ENCODE measurements at regions of chr14 and their contacts with region 1.

Region 1: GRCh38 chr14:70640938-70641547 is 673 bp upstream of the TTC9 start:
- DNase-seq: peak in 1 of 2 experiments; percentile 66
- H3K4me3 ChIP-seq: peak overlapping the region; percentile 59 to 98 (median 78)
- H3K27ac ChIP-seq: no peak overlapping the region
- H3K4me1 ChIP-seq: peaks cover 11 to 21% (median 14%) of the 10 kb centered on the region in 4 experiments; a peak in 5 of 7 replicates
- H3K27me3 ChIP-seq: no peaks in the 10 kb centered on the region
- CTCF ChIP-seq: no peak
- EP300 ChIP-seq: no peak
- POLR2A ChIP-seq: no peak
- RAD21 ChIP-seq: no peak

Region 2: GRCh38 chr14:70498191-70498590 is 142.9 kb before region 1 on chr14:
- CTCF ChIA-PET with region 1: no interaction called
- POLR2A ChIA-PET with region 1: no interaction called
- DNase-seq: no peak
- H3K4me3 ChIP-seq: no peak overlapping the region
- H3K27ac ChIP-seq: no peak overlapping the region
- H3K4me1 ChIP-seq: no peaks in the 10 kb centered on the region
- H3K27me3 ChIP-seq: no peaks in the 10 kb centered on the region
- CTCF ChIP-seq: no peak
- EP300 ChIP-seq: no peak
- POLR2A ChIP-seq: no peak
- RAD21 ChIP-seq: no peak

Region 3: DNA sequence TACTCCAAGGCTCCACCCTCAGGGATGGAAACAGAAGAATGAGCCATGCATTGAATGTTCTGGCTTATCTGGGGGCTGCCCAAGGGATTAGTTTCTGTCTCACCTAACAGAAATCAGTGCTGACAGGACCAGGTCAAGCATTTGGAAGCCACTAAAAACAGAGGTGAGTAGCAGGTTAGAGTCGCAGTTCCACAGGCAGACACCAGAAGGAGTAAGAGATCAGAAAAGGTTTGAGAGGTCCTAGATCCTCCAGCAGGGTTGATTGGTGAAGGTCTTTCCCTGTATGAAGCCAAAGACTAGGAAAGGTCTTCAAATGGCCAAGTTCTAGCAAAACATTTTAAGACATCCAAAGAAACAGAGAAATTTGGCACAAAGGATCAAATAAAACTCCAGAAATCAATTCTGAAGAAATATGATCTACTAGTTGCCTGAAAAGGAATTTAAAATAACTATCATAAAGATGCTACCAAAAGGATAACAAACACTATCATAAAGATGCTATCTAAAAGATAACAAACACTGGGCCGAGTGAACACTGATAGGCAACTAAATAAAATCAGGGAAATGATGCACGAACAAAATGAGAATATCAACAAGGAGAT is 18.8 kb before region 1 on chr14:
- CTCF ChIA-PET with region 1: interaction called, 43 read pairs
- POLR2A ChIA-PET with region 1: interaction called, 5 read pairs
- DNase-seq: peak in 1 of 2 experiments; percentile 75
- H3K4me3 ChIP-seq: no peak overlapping the region
- H3K27ac ChIP-seq: no peak overlapping the region
- H3K4me1 ChIP-seq: no peaks in the 10 kb centered on the region
- H3K27me3 ChIP-seq: no peaks in the 10 kb centered on the region
- CTCF ChIP-seq: peak; percentile 31 to 95 (median 94)
- EP300 ChIP-seq: no peak
- POLR2A ChIP-seq: no peak
- RAD21 ChIP-seq: peak; percentile 96 to 97

Region 4: DNA sequence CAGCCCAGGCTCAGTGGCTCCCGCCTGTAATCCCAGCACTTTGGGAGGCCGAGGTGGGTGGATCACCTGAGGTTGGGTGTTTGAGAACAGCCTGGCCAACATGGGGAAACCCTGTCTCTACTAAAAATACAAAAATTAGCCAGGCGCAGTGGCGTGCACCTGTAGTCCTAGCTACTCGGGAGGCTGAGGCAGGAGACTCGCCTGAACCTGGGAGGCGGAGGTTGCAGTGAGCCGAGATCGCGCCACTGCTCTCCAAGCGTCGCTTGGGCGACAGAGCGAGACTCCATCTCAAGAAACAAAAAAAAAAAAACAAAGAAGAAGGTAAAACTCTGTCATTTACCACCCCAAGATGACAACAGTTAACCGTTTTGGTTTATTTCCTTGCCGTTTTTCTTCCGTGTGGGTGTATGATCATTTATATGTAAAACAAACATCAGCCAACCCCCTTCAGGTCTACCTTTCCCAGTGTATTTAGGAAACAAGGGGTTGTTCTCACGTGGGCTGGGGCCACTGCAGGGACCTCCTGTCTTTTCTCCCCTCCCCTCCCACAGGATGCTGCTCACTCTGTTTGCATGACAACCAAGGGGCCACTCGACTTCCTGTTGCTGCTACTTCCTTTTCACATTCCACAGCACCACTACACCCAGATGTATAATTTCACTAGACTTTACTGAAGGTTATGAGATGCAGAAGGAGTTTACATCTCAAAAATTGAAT is 14.2 kb after region 1 on chr14:
- CTCF ChIA-PET with region 1: interaction called, 4 read pairs
- POLR2A ChIA-PET with region 1: interaction called, 116 read pairs
- DNase-seq: peak in 1 of 2 experiments; percentile 53
- H3K4me3 ChIP-seq: peak overlapping the region in 1 of 4 experiments; percentile 32; a peak in 1 of 8 replicates
- H3K27ac ChIP-seq: peak overlapping the region; percentile 65
- H3K4me1 ChIP-seq: peaks cover 7 to 39% (median 33%) of the 10 kb centered on the region in 4 experiments
- H3K27me3 ChIP-seq: no peaks in the 10 kb centered on the region
- CTCF ChIP-seq: no peak
- EP300 ChIP-seq: no peak; a peak in 1 of 3 replicates
- POLR2A ChIP-seq: no peak
- RAD21 ChIP-seq: no peak